Colonic mucosa (tissue), 4 donors: ENCODE measurements at regions of chr19 and their contacts with region 1.

Region 1: DNA sequence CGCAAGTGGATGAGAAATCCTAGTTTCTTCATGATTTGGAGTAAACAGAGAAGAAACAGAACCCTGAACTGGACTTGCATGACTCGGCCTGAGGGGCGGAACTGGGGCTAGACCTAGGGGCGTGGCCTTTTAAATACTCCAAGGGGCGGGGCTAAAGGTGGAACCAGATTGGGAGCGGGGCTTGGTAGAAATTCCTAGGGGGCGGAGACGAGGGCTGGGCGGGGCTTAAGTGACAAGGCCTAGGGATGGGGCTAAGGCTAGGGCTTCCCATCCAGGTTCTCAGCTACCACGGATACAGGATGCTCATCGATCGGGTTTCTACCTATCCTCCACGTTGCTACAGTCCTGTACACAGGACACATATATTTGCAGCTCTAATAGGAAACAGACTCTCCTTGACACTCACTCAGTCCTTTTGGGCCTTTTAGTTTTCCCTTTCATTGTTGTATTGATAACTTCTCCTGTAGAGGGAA is 372 bp upstream of the ZNF699 start:
- DNase-seq: peak; percentile 95
- H3K4me3 ChIP-seq: peak overlapping the region; percentile 81
- H3K27ac ChIP-seq: peak overlapping the region; percentile 89
- H3K4me1 ChIP-seq: no peaks in the 10 kb centered on the region
- H3K27me3 ChIP-seq: no peaks in the 10 kb centered on the region
- CTCF ChIP-seq: no peak

Region 2: DNA sequence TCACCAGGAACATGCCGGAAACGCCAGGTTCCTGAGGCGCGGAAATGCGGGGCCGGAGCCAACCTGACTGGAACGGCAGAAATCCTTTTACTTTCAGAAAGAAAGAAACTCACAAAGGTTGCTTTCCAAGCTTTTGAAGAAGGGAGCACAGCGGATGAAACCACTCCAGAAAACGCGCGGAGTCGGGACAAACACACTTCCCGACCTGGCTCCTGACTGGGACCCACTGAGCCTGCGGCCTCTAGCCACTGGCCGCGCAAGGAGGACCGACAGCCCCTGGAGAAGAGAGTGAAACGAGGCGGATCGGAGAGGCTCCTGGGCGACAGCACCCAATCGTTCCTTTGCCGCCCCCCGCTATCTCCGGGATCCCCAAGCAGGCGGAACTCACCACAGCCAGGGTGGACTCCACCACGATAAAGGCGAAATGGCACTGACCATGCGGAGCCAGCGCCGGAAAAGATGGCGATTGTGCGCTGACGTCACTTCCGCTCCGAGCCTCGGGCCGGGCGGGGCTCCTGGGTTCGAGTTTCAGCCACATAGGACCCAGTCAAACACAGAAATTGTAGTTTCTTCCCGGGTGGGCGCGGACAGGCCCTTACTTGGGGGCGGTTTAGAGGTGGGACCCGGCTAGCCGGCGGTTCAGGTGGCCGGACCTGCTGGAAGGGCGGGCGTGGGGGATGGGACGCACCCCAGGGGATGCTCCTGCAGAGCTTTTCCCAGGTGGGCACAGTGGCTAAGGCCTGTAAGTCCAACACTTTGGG is 274.2 kb after region 1 on chr19 and contains the start of gene ZNF121:
- intact Hi-C with region 1: loop called (anchors 5 kb)
- DNase-seq: peak; percentile 90
- H3K4me3 ChIP-seq: peak within 1 kb of the TSS; percentile 90
- H3K27ac ChIP-seq: peak within 1 kb of the TSS; percentile 78
- H3K4me1 ChIP-seq: no peaks in the 10 kb centered on the region
- H3K27me3 ChIP-seq: no peaks in the 10 kb centered on the region
- CTCF ChIP-seq: no peak
- total RNA-seq, gene ZNF121: 18.3 to 24.3 TPM